Activated T-helper 1 cell treated with anti-CD3 and anti-CD28 coated beads, Interleukin-12 subunit alpha, Interleukin-12 subunit beta, Interleukin-2, Interleukin-4 antibody, amounts not matched to agents 30 ng/mL and 10 ng/mL and 1 ng/mL, durations not matched to agents 14 hours and 24 hours and 36 hours (primary cell): ENCODE measurements at regions of chr3 and their contacts with region 1.

Region 1: GRCh38 chr3:141243271-141243707 is 11.7 kb downstream of the PXYLP1 start:
- DNase-seq: peak; percentile 34
- H3K4me3 Mint-ChIP-seq: peak overlapping the region; percentile 39
- H3K27ac Mint-ChIP-seq: peak overlapping the region; percentile 5
- H3K4me1 Mint-ChIP-seq: peaks cover 40% of the 10 kb centered on the region
- H3K27me3 Mint-ChIP-seq: no peaks in the 10 kb centered on the region

Region 2: DNA sequence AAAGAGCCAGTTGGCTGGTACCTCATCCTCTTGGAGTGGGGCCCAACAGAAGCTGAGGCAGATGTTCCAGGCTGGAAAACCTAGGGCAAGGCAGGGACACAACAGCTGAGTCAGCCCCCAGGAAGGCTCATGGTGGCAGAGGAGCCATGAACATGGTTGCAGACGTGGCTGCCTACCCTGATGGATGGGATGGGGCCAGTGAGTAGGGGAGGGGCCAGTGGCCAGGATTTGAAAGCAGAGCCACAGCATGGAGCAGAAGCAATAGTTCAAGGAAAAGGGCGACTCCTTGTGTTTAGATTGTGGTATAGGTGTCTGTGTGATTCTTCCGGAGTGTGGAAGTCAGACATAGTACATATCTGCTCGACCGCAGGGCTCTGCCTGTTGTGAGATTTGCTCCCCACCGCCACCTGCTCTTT is 12.6 kb after region 1 on chr3:
- intact Hi-C with region 1: loop called (anchors 1 kb)
- DNase-seq: peak; percentile 31
- H3K4me3 Mint-ChIP-seq: no peak overlapping the region
- H3K27ac Mint-ChIP-seq: peak overlapping the region; percentile 59
- H3K4me1 Mint-ChIP-seq: peaks cover 56% of the 10 kb centered on the region
- H3K27me3 Mint-ChIP-seq: no peaks in the 10 kb centered on the region